Activated T-helper 2 cell treated with anti-CD3 and anti-CD28 coated beads, Interferon-gamma antibody, Interleukin-2, Interleukin-4, amounts not matched to agents 10 μg/mL and 5 μg/mL and 100 μg/mL, durations not matched to agents 14 hours and 24 hours and 36 hours (primary cell): ENCODE measurements at regions of chr14 and their contacts with region 1.

Region 1: DNA sequence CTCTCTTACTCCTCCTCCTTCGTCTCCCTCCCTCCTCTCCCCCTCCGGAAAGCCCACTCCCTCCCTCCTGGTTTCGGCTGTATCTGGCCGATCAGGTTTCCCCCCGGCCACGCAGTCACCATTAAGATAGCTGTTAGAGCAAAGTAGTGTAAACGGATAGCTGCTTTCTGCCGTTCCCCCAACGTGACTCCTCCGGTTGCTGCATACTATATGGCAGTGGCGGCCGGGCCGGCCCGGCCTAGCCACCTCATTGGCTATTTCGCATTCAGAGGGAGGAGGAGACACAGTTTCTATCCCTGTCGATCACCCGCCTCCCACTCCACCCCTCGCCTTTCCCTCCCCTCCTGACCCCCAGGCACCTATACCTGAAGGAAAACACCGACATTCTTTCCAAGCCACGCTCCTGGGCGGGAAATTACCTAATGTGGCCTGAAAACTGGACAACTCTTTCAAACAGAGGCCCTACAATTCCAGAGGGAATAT is at the start of gene SIX4:
- DNase-seq: no peak
- H3K4me3 Mint-ChIP-seq: peak within 1 kb of the TSS; percentile 83
- H3K27ac Mint-ChIP-seq: peak within 1 kb of the TSS; percentile 20
- H3K4me1 Mint-ChIP-seq: peaks cover 15% of the 10 kb centered on the region
- H3K27me3 Mint-ChIP-seq: peaks cover 72% of the 10 kb centered on the region
- total RNA-seq, gene SIX4: 1.1 and 1.3 TPM in 2 replicates

Region 2: GRCh38 chr14:60430276-60430675 is 293.9 kb before region 1 on chr14:
- intact Hi-C with region 1: no loop called
- DNase-seq: no peak
- H3K4me3 Mint-ChIP-seq: no peak overlapping the region
- H3K27ac Mint-ChIP-seq: no peak overlapping the region
- H3K4me1 Mint-ChIP-seq: no peaks in the 10 kb centered on the region
- H3K27me3 Mint-ChIP-seq: no peaks in the 10 kb centered on the region

Region 3: DNA sequence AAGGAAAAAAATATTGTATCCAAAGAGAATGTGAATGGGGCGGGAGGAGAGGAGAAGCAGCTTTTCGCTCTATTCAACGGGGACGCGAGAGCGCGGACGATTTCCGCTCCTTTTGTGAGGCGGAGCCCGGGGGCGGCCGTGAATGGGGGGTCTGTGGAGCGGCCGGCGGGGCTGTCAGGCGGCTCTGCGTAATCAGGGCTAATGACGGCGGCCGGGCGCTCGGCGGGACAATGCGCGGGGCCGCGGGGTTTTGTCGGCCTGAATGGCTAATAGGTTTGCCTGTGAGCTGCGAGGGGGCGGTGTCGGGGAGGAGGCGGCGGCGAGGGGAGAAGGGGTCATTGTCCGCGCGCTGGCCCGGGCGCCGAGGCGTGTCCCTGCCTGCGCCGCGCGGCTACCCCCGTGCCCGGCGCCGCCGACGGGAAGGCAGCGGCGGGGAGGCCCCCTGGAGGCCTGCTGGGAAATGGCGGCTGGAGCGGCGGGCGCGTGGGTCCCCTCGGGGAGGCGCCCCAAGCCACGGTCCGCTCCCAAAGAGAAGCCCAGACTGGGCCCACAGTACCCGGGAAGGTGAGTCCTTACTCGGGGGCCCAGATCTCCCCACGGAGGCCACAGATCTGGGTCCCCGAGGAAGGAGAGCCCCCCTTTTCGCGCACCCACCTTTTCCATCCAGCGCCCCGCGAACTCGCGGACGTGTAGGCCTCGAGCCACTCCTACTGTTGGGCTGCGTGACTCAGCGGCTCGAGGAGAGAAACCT is 209.3 kb before region 1 on chr14:
- intact Hi-C with region 1: loop called (anchors 5 kb)
- DNase-seq: no peak
- H3K4me3 Mint-ChIP-seq: peak overlapping the region; percentile 13
- H3K27ac Mint-ChIP-seq: no peak overlapping the region
- H3K4me1 Mint-ChIP-seq: peaks cover 8% of the 10 kb centered on the region
- H3K27me3 Mint-ChIP-seq: peaks cover 70% of the 10 kb centered on the region

Region 4: GRCh38 chr14:60656686-60657455 is 67.3 kb before region 1 on chr14:
- intact Hi-C with region 1: loop called (anchors 5 kb)
- DNase-seq: no peak
- H3K4me3 Mint-ChIP-seq: peak overlapping the region; percentile 79
- H3K27ac Mint-ChIP-seq: no peak overlapping the region
- H3K4me1 Mint-ChIP-seq: peaks cover 28% of the 10 kb centered on the region
- H3K27me3 Mint-ChIP-seq: peaks cover 83% of the 10 kb centered on the region

Region 5: GRCh38 chr14:60734465-60735242 is 10.5 kb after region 1 on chr14 and contains the start of gene MNAT1:
- intact Hi-C with region 1: loop called (anchors 1 kb)
- DNase-seq: peak; percentile 70
- H3K4me3 Mint-ChIP-seq: peak within 1 kb of the TSS; percentile 99
- H3K27ac Mint-ChIP-seq: peak within 1 kb of the TSS; percentile 83
- H3K4me1 Mint-ChIP-seq: peaks cover 23% of the 10 kb centered on the region
- H3K27me3 Mint-ChIP-seq: peaks cover 32% of the 10 kb centered on the region
- total RNA-seq, gene MNAT1: 56.2 and 57.5 TPM in 2 replicates

Region 6: GRCh38 chr14:60980811-60981632 is 256.8 kb after region 1 on chr14 and contains the starts of genes SLC38A6 and TRMT5:
- intact Hi-C with region 1: loop called (anchors 1 kb)
- DNase-seq: peak; percentile 88
- H3K4me3 Mint-ChIP-seq: no peak within 1 kb of the TSS
- H3K27ac Mint-ChIP-seq: no peak within 1 kb of the TSS
- H3K4me1 Mint-ChIP-seq: peaks cover 28% of the 10 kb centered on the region
- H3K27me3 Mint-ChIP-seq: no peaks in the 10 kb centered on the region
- total RNA-seq, gene SLC38A6: 4.6 and 5.2 TPM in 2 replicates
- total RNA-seq, gene TRMT5: 14.1 and 15.5 TPM in 2 replicates

Region 7: DNA sequence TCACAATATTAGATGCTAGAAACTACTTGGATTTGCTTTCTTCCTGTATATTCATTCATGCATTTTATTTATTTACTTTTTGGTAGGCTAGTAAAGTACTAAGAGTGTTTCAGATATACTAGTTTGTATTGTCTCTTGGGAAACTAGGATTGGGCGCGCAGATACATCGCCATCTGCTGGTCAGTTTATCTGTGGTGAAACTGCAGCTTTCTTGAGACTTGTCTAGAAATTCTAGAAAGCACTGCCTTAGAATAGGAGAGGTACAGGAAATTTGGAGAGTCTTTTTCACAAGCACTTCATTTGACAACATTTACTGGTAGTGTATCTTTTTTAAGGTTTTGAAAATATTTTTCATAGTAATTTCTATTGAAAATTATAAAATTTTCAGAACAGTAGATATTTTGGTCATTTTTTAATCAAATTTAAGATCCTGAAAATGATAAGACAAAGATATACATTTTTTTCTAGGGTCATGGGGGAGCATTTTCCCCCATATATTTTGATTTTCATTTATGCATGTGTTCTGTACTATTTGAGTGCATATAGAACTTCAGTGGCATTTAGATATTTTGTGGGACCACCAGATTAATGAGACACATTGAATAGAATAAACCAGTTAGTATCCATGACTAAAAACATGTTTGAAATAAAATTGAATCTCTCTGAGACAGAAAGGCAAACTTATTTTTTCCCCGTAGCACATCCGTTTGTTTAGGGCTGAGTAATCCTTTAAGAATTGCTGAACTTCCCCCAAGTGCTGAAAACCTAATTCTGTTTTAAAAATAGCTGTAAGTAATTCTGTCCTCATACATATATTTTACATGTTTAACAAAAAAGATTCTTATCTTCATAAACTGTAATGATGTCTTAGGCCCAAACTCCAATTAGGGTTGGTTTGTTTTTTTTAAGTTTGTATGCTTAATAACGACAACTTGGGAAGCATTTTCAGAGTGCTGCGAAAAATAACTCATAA is 301.4 kb after region 1 on chr14:
- intact Hi-C with region 1: loop called (anchors 5 kb)
- DNase-seq: peak; percentile 31
- H3K4me3 Mint-ChIP-seq: no peak overlapping the region
- H3K27ac Mint-ChIP-seq: no peak overlapping the region
- H3K4me1 Mint-ChIP-seq: peaks cover 5% of the 10 kb centered on the region
- H3K27me3 Mint-ChIP-seq: no peaks in the 10 kb centered on the region